Endothelial cell of umbilical vein (primary cell): ENCODE measurements at regions of chr2 and their contacts with region 1.

Region 1: GRCh38 chr2:9693211-9693520 is 62.4 kb upstream of the YWHAQ start:
- DNase-seq: no peak
- H3K4me3 ChIP-seq: no peak overlapping the region
- H3K27ac ChIP-seq: no peak overlapping the region
- H3K4me1 ChIP-seq: no peaks in the 10 kb centered on the region
- H3K27me3 ChIP-seq: no peaks in the 10 kb centered on the region
- CTCF ChIP-seq: no peak
- POLR2A ChIP-seq: no peak

Region 2: GRCh38 chr2:9165625-9166024 is 527.5 kb before region 1 on chr2:
- CTCF ChIA-PET with region 1: no interaction called
- POLR2A ChIA-PET with region 1: no interaction called
- dilution Hi-C with region 1: no loop called
- intact Hi-C with region 1: no loop called
- DNase-seq: no peak
- H3K4me3 ChIP-seq: no peak overlapping the region
- H3K27ac ChIP-seq: no peak overlapping the region
- H3K4me1 ChIP-seq: no peaks in the 10 kb centered on the region
- H3K27me3 ChIP-seq: no peaks in the 10 kb centered on the region
- CTCF ChIP-seq: no peak
- POLR2A ChIP-seq: no peak

Region 3: GRCh38 chr2:9610781-9611548 is 82.2 kb before region 1 on chr2:
- CTCF ChIA-PET with region 1: no interaction called
- POLR2A ChIA-PET with region 1: no interaction called
- dilution Hi-C with region 1: no loop called
- intact Hi-C with region 1: no loop called
- DNase-seq: no peak
- H3K4me3 ChIP-seq: no peak overlapping the region
- H3K27ac ChIP-seq: no peak overlapping the region
- H3K4me1 ChIP-seq: peaks cover 16% of the 10 kb centered on the region
- H3K27me3 ChIP-seq: no peaks in the 10 kb centered on the region
- CTCF ChIP-seq: no peak
- POLR2A ChIP-seq: no peak

Region 4: GRCh38 chr2:9681427-9681817 is 11.7 kb before region 1 on chr2:
- CTCF ChIA-PET with region 1: interaction called, 4 read pairs
- POLR2A ChIA-PET with region 1: no interaction called
- dilution Hi-C with region 1: no loop called
- intact Hi-C with region 1: loop called (anchors 1 kb)
- DNase-seq: peak; percentile 58
- H3K4me3 ChIP-seq: no peak overlapping the region
- H3K27ac ChIP-seq: peak overlapping the region; percentile 5
- H3K4me1 ChIP-seq: peaks cover 5% of the 10 kb centered on the region
- H3K27me3 ChIP-seq: no peaks in the 10 kb centered on the region
- CTCF ChIP-seq: no peak
- POLR2A ChIP-seq: no peak

Region 5: GRCh38 chr2:9753276-9753600 is 60.1 kb after region 1 on chr2:
- CTCF ChIA-PET with region 1: no interaction called
- POLR2A ChIA-PET with region 1: no interaction called
- dilution Hi-C with region 1: no loop called
- intact Hi-C with region 1: loop called (anchors 5 kb)
- DNase-seq: peak; percentile 84
- H3K4me3 ChIP-seq: no peak overlapping the region
- H3K27ac ChIP-seq: no peak overlapping the region
- H3K4me1 ChIP-seq: peaks cover 7% of the 10 kb centered on the region
- H3K27me3 ChIP-seq: peaks cover 14 to 18% of the 10 kb centered on the region in 2 experiments
- CTCF ChIP-seq: no peak
- POLR2A ChIP-seq: peak; percentile 27